WTC11 (cell line): ENCODE measurements at regions of chr12 and their contacts with region 1.

Region 1: GRCh38 chr12:121849665-121850064 is 9.0 kb downstream of the HPD start:
- DNase-seq: no peak
- ATAC-seq: peak; percentile 60; the same call in 1 of the 2 replicates
- H3K4me3 Mint-ChIP-seq: no peak overlapping the region
- H3K27ac Mint-ChIP-seq: no peak overlapping the region
- H3K4me1 Mint-ChIP-seq: no peaks in the 10 kb centered on the region
- H3K27me3 Mint-ChIP-seq: peaks cover 3% of the 10 kb centered on the region
- CTCF ChIP-seq: no peak

Region 2: DNA sequence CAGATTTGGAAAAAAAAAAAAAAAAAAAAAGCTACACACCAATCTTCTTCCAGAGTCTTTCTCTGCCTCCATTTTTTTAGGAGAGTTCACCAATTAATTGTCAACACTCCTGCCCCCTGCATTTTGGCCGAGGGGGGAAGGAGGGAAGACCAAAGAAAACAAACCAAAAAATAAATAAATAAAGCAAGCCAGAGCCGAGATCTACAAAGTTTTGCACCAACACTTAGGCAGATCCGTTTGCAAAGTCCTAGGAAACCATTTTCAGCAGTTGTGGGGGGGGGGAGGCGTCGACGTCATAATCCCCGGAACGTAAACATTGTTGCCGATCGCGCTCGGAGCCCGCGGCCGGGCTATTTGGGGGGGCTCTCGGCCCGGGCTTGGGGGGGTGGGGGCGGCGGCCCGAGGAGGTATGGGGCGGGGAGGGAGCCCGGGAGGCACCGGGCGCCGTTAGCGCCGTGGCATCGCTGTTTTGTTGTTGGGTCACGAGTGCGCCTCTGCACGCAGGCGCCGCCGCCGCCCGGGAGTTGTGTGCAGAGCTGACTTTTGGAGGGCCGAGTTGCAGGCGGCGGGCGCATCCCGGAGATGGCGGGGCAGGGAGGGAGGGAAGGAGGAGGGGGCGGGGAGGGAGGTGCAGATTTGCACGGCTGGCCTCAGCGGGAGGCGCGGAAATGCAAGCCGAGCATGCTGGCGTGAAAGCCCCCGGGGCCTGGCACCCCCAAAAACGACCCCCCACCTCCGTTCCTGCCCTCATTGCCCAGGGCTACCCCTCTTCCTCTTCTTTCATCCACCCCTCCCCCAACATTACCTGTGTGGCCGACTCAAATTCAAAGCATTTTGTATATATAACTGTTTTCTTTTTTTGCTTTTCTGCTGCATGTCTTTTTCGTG is 269.4 kb before region 1 on chr12:
- CTCF ChIA-PET with region 1: no interaction called
- POLR2A ChIA-PET with region 1: no interaction called
- DNase-seq: peak; percentile 81
- ATAC-seq: peak; percentile 7; the same call in 1 of the 2 replicates
- H3K4me3 Mint-ChIP-seq: peak overlapping the region; percentile 99
- H3K27ac Mint-ChIP-seq: peak overlapping the region; percentile 100
- H3K4me1 Mint-ChIP-seq: peaks cover 46% of the 10 kb centered on the region
- H3K27me3 Mint-ChIP-seq: no peaks in the 10 kb centered on the region
- CTCF ChIP-seq: no peak

Region 3: GRCh38 chr12:121610239-121611149 is 239.2 kb before region 1 on chr12:
- CTCF ChIA-PET with region 1: interaction called, 11 read pairs
- POLR2A ChIA-PET with region 1: no interaction called
- DNase-seq: no peak
- ATAC-seq: no peak
- H3K4me3 Mint-ChIP-seq: no peak overlapping the region
- H3K27ac Mint-ChIP-seq: peak overlapping the region; percentile 61; the same call in 1 of the 2 replicates
- H3K4me1 Mint-ChIP-seq: peaks cover 21% of the 10 kb centered on the region
- H3K27me3 Mint-ChIP-seq: no peaks in the 10 kb centered on the region
- CTCF ChIP-seq: no peak

Region 4: DNA sequence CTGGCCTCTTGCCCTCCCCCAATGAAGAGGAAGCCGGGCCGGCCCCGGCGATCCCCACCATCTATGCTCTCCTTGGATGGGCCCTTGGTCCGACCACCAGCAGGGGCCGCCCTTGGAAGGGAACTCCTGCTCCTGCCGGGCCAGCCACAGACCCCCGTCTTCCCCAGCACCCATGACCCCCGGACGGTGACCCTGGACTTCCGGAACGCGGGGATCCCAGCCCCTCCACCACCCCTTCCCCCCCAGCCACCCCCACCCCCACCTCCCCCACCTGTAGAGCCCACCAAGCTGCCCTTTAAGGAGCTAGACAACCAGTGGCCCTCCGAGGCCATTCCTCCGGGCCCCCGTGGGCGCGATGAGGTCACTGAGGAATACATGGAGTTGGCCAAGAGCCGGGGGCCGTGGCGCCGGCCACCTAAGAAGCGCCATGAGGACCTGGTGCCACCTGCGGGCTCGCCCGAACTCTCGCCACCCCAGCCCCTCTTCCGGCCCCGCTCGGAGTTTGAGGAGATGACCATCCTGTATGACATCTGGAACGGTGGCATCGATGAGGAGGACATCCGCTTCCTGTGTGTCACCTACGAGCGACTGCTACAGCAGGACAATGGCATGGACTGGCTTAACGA is 26.5 kb before region 1 on chr12:
- CTCF ChIA-PET with region 1: interaction called, 3 read pairs
- POLR2A ChIA-PET with region 1: interaction called, 11 read pairs
- DNase-seq: no peak
- ATAC-seq: peak; percentile 48; the same call in 1 of the 2 replicates
- H3K4me3 Mint-ChIP-seq: no peak overlapping the region
- H3K27ac Mint-ChIP-seq: no peak overlapping the region
- H3K4me1 Mint-ChIP-seq: no peaks in the 10 kb centered on the region
- H3K27me3 Mint-ChIP-seq: no peaks in the 10 kb centered on the region
- CTCF ChIP-seq: no peak